PC-9 (cell line): ENCODE measurements at regions of chr7 and their contacts with region 1.

Region 1: GRCh38 chr7:133070562-133070961 is 11.3 kb downstream of the CHCHD3 start:
- DNase-seq: no peak
- H3K4me3 ChIP-seq: no peak overlapping the region
- H3K27ac ChIP-seq: no peak overlapping the region
- H3K4me1 ChIP-seq: no peaks in the 10 kb centered on the region
- H3K27me3 ChIP-seq: no peaks in the 10 kb centered on the region
- CTCF ChIP-seq: no peak

Region 2: DNA sequence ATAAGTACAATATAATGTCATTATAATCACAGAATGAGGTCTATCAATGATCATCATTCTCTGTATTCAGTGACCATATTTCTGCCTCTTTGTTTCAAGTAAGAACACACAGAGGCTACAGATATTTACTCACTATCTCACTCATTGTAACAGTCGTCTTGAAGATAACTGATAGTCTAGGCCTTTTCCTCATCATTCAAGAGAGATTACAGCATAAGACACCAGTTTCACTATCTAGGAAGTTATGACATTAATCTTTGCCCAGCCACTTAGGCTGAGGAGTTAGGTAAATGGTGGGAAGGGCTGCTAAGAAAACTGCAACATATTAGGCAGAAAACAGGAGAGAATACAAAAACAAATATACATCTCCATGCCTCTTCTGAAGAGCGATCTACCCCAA is 114.0 kb before region 1 on chr7:
- CTCF ChIA-PET with region 1: no interaction called
- POLR2A ChIA-PET with region 1: no interaction called
- intact Hi-C with region 1: no loop called
- DNase-seq: no peak
- H3K4me3 ChIP-seq: no peak overlapping the region
- H3K27ac ChIP-seq: no peak overlapping the region
- H3K4me1 ChIP-seq: no peaks in the 10 kb centered on the region
- H3K27me3 ChIP-seq: no peaks in the 10 kb centered on the region
- CTCF ChIP-seq: no peak

Region 3: DNA sequence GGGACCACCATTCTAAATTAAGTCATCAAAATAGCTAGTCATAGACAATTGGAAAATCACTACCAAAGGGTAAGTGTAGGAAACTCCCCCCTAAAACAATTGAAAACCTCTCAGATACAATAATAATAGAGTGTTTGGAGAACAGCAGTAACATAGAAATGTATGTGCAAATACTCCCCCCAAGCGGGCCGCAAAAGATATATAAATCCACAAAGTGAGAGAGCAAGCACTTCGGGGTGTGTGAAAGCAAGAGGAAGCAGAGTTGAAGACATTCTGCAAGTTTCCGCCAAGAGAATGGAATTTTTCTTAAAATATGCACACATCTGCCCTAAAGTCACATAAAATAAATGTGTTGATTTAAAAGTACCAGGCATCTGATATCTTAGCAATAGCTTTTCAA is 22.0 kb before region 1 on chr7:
- CTCF ChIA-PET with region 1: no interaction called
- POLR2A ChIA-PET with region 1: interaction called, 16 read pairs
- intact Hi-C with region 1: no loop called
- DNase-seq: no peak
- H3K4me3 ChIP-seq: no peak overlapping the region
- H3K27ac ChIP-seq: no peak overlapping the region
- H3K4me1 ChIP-seq: no peaks in the 10 kb centered on the region
- H3K27me3 ChIP-seq: no peaks in the 10 kb centered on the region
- CTCF ChIP-seq: no peak

Region 4: GRCh38 chr7:133118261-133118660 is 47.7 kb after region 1 on chr7:
- CTCF ChIA-PET with region 1: no interaction called
- POLR2A ChIA-PET with region 1: interaction called, 13 read pairs
- intact Hi-C with region 1: no loop called
- DNase-seq: no peak
- H3K4me3 ChIP-seq: no peak overlapping the region
- H3K27ac ChIP-seq: no peak overlapping the region
- H3K4me1 ChIP-seq: no peaks in the 10 kb centered on the region
- H3K27me3 ChIP-seq: peaks cover 80% of the 10 kb centered on the region
- CTCF ChIP-seq: no peak